ENCODE measurements at regions of chr6 and their contacts with region 1.

Region 1: GRCh38 chr6:156890627-156891314 is 113.6 kb downstream of the ARID1B start:
- DNase-seq: no peak
- ATAC-seq: no peak
- H3K4me3 ChIP-seq: no peak overlapping the region
- H3K27ac ChIP-seq: peak overlapping the region; percentile 46 to 74 (median 64)
- H3K4me1 ChIP-seq: peaks cover 63 to 64% of the 10 kb centered on the region in 2 donors
- H3K27me3 ChIP-seq: no peaks in the 10 kb centered on the region
- CTCF ChIP-seq: no peak
- POLR2A ChIP-seq: no peak

Region 2: DNA sequence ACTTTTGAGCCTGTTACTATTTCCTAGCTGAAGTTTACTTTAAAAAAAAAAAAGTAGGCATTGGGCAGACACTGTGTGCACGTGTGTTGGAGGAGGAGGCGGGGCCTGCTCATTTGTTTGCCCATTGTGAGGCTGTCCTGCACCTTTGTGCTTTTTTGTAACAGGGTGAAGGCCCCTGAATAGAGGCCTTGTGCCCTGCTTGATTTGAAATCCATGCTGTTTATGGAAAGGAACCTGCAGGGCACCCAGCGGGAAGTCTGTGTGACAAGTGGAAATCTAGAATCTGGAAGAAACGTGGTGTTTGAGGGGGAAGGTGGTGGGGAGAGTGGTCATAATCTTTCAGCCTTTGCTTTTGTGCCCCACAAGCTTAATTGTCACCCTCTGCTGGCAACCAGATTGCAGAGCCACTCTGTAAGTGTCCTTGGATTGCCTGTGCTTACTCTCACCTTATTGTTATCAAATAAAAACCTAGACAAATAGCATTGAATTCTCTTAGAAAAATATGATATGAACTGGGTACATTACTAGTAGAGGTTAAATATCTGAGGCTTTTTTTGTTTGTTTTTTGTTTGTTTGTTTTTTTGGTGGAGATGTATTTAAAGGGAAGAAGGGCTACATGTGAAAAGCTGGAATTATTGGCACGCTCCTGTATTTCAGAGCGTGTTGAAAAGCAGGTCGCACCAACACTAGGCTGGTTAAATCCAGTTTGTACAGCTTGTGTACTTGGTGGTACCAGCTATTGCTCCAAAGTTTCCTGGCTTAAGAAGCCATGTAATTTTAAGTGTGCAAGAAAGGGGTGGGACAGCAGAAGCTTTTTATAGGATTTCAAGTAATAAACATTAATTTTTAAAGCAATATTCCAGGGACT is 42.7 kb after region 1 on chr6:
- in situ Hi-C with region 1: no loop called
- intact Hi-C with region 1: loop called (anchors 5 kb)
- DNase-seq: no peak
- ATAC-seq: peak; percentile 41 to 63
- H3K4me3 ChIP-seq: no peak overlapping the region
- H3K27ac ChIP-seq: peak overlapping the region; percentile 36 to 72 (median 59)
- H3K4me1 ChIP-seq: peaks cover 45 to 65% of the 10 kb centered on the region in 2 donors
- H3K27me3 ChIP-seq: no peaks in the 10 kb centered on the region
- CTCF ChIP-seq: no peak
- POLR2A ChIP-seq: no peak

Region 3: DNA sequence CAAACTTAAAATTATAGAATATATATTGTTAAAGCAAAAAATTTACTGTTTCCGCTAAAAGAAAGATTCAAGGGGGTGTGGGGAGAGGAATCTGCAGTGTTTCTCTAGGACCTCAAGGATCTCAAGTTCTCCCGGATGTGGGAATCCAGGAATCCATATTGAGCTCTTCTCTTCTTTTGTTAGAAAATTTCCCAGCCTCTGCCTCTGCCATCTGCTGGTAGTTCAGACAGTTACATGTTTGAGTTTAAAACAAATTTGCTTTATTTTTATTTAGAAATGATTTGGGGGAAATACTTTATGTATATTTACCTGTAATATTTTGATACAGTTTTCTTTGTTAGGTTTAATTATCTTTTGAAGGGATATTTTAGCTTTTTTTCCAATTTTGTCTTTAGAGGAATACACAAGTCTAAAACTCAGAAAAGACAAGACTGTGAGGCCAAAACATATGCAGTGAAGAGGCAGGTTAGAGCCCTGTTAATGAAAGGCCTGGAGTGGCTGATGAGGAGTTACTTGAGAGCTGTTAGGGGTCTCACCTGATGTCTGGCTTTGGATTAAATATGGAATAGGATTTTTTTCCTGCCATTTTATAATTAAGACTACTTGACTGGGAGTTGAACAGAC is 155.2 kb after region 1 on chr6:
- in situ Hi-C with region 1: no loop called
- intact Hi-C with region 1: no loop called
- DNase-seq: no peak
- ATAC-seq: peak; percentile 43 to 57
- H3K4me3 ChIP-seq: no peak overlapping the region
- H3K27ac ChIP-seq: no peak overlapping the region
- H3K4me1 ChIP-seq: peaks cover 34 to 39% of the 10 kb centered on the region in 2 donors
- H3K27me3 ChIP-seq: no peaks in the 10 kb centered on the region
- CTCF ChIP-seq: peak; percentile 17 to 63 (median 57)
- POLR2A ChIP-seq: no peak

Measured in gastrocnemius medialis (tissue), 4 donors.